ENCODE measurements at regions of chr3 and their contacts with region 1.

Region 1: GRCh38 chr3:182683453-182683852 is 109.9 kb upstream of the ATP11B start:
- DNase-seq: peak; percentile 72
- CTCF ChIP-seq: peak; percentile 85

Region 2: GRCh38 chr3:181326637-181327223 is 1356.7 kb before region 1 on chr3:
- CTCF ChIA-PET with region 1: interaction called, 11 read pairs
- POLR2A ChIA-PET with region 1: no interaction called
- DNase-seq: peak; percentile 34
- CTCF ChIP-seq: peak; percentile 65

Region 3: DNA sequence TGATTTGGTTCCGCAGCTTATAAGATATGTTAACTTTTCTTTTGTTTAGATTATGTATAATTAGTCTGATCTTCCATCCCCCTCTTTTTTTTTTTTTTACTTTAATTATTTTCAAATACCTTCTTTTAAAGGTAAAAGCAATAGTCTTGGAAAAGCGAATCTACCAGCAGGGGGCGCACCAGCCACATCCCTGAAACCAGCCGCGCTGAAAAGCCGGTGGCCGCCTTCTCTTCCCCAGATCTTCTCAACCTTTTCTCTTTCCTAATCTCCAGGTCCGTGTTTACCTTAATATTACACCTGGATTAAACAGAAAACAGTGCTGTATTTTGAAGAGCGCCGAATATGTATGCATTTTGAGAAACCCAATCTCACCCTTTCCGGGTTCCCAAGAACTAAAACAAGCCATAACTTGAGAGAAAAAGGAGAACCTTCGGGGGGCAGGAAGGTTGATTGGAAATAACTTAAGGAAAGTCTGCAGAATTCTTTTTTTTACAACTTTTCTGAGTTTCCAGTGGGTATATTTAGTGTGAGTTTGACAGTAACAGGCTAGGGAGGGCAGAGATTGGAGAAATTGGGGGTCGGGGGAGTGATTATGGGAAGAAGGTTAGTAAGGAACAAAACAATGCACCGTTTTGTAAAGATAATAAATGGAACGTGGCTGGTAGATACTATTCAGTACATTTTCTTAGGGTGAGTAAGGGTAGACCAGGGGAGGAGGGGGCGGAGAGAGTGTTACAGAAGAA is 973.7 kb before region 1 on chr3:
- CTCF ChIA-PET with region 1: interaction called, 31 read pairs
- POLR2A ChIA-PET with region 1: no interaction called
- DNase-seq: no peak
- CTCF ChIP-seq: peak; percentile 77

Region 4: GRCh38 chr3:182671942-182672341 is 11.5 kb before region 1 on chr3:
- CTCF ChIA-PET with region 1: interaction called, 12 read pairs
- POLR2A ChIA-PET with region 1: no interaction called
- DNase-seq: no peak
- CTCF ChIP-seq: no peak

Region 5: GRCh38 chr3:182697345-182697919 is 14.0 kb after region 1 on chr3:
- CTCF ChIA-PET with region 1: interaction called, 16 read pairs
- POLR2A ChIA-PET with region 1: no interaction called
- DNase-seq: no peak
- CTCF ChIP-seq: no peak

Region 6: GRCh38 chr3:182713743-182714517 is 30.5 kb after region 1 on chr3:
- CTCF ChIA-PET with region 1: interaction called, 16 read pairs
- POLR2A ChIA-PET with region 1: no interaction called
- DNase-seq: peak; percentile 45
- CTCF ChIP-seq: peak; percentile 83

Measured in GM10248 (cell line).